Panc1 (cell line): ENCODE measurements at regions of chr7 and their contacts with region 1.

Region 1: DNA sequence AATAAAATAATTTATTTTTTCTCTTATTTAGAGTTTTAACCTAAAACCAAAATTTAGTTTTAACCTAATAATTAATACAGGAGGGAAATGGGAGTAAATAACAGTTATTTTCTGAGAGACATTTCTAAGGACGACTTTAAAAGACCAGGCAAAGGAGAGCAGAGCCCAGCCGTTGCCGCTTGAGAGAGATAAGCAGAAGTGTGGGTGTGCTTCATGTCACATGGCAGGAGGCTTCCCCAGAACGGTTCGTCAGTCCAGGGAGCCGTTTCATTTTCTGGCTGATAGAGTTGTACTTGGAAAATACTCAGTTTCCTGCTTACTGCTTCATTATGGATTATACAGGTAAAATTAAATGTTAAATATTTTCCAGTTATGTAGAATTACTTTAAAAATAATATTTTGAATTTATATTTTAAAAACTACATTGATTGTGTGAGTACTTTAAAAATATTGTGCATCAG is 61.4 kb downstream of the ST7 start:
- DNase-seq: no peak
- ATAC-seq: peak; percentile 79
- H3K4me3 ChIP-seq: peak overlapping the region; percentile 16 to 24; a peak in 3 of 4 replicates
- H3K27ac ChIP-seq: peak overlapping the region; percentile 82
- H3K4me1 ChIP-seq: peaks cover 28% of the 10 kb centered on the region
- H3K27me3 ChIP-seq: no peaks in the 10 kb centered on the region
- CTCF ChIP-seq: no peak

Region 2: DNA sequence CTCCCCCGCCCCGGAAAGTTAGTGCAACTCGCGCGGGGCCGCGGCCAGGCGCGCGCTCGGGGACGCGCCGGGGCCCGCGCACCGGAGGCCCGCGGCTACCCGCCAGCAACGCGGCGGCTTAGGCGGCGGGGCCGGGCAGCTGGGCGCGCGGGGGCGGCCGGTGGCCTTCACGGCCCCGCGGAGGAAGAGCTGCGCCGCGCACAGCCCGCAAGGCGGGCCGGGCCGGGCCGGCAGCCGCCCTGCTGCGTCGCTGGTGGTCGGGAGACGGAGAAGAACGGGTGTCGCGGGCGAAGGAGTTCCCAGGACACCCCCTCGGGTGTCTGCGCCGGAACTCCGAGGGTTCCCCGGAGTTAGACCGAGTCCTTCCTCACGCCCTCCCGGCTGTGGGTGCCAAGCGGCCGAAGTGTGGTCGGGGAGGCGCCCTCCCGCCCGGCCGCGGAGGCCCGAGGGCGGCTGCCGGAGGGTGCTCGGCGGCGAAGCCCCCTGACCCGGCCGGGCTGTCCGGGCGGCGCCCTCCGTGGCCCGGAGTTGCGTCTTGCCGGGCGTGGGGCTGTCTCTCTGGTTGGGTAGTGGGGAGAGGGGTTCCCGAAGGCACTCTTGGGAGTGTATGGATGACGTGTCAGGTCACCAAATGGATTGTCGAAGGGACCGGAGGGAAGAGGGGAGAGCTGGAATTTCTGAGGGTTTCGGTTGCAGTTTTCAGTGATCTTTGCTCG is 60.8 kb before region 1 on chr7:
- CTCF ChIA-PET with region 1: no interaction called
- POLR2A ChIA-PET with region 1: no interaction called
- in situ Hi-C with region 1: no loop called
- intact Hi-C with region 1: loop called (anchors 5 kb)
- DNase-seq: peak; percentile 36
- ATAC-seq: peak; percentile 77
- H3K4me3 ChIP-seq: peak overlapping the region; percentile 87 to 91
- H3K27ac ChIP-seq: peak overlapping the region; percentile 88
- H3K4me1 ChIP-seq: peaks cover 38% of the 10 kb centered on the region
- H3K27me3 ChIP-seq: no peaks in the 10 kb centered on the region
- CTCF ChIP-seq: no peak